Heart left ventricle (tissue), 16 donors: ENCODE measurements at regions of chr7 and their contacts with region 1.

Region 1: GRCh38 chr7:93902777-93903423 is 3.5 kb upstream of the GNGT1 start:
- DNase-seq: peak in 1 of 5 donors; percentile 28
- ATAC-seq: peak; percentile 42 to 60 (median 51)
- H3K4me3 ChIP-seq: no peak overlapping the region
- H3K27ac ChIP-seq: no peak overlapping the region
- H3K4me1 ChIP-seq: peaks cover 0 to 5% (median 0%) of the 10 kb centered on the region in 12 donors
- H3K27me3 ChIP-seq: no peaks in the 10 kb centered on the region
- CTCF ChIP-seq: peak; percentile 62 to 90 (median 79)
- POLR2A ChIP-seq: no peak

Region 2: GRCh38 chr7:93799750-93800357 is 103.0 kb before region 1 on chr7:
- intact Hi-C with region 1: no loop called
- DNase-seq: no peak
- ATAC-seq: no peak
- H3K4me3 ChIP-seq: no peak overlapping the region
- H3K27ac ChIP-seq: no peak overlapping the region
- H3K4me1 ChIP-seq: no peaks in the 10 kb centered on the region
- H3K27me3 ChIP-seq: no peaks in the 10 kb centered on the region
- CTCF ChIP-seq: peak in 10 of 12 donors; percentile 29 to 60 (median 38)
- POLR2A ChIP-seq: no peak

Region 3: DNA sequence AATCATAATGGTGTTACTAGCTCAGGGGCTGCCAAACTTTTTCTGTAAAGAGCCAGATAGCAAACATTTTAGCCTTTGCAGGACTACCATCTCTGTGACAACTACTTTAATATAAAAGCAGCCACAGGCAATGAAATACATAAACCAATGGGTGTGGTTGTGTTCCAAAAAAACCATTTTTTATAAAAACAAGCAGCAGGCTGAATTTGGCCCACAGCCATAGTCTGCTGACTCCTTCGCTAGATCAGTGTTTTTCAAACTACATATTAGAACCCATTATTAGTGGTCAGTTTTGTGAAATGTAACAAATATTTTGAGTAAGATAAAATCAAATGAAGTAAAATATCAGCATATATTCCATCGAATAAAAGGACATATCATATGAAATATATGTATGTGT is 32.2 kb after region 1 on chr7:
- intact Hi-C with region 1: no loop called
- DNase-seq: peak in 1 of 5 donors; percentile 26
- ATAC-seq: no peak
- H3K4me3 ChIP-seq: no peak overlapping the region
- H3K27ac ChIP-seq: no peak overlapping the region
- H3K4me1 ChIP-seq: peaks cover 0 to 8% (median 0%) of the 10 kb centered on the region in 12 donors
- H3K27me3 ChIP-seq: no peaks in the 10 kb centered on the region
- CTCF ChIP-seq: no peak
- POLR2A ChIP-seq: no peak

Region 4: DNA sequence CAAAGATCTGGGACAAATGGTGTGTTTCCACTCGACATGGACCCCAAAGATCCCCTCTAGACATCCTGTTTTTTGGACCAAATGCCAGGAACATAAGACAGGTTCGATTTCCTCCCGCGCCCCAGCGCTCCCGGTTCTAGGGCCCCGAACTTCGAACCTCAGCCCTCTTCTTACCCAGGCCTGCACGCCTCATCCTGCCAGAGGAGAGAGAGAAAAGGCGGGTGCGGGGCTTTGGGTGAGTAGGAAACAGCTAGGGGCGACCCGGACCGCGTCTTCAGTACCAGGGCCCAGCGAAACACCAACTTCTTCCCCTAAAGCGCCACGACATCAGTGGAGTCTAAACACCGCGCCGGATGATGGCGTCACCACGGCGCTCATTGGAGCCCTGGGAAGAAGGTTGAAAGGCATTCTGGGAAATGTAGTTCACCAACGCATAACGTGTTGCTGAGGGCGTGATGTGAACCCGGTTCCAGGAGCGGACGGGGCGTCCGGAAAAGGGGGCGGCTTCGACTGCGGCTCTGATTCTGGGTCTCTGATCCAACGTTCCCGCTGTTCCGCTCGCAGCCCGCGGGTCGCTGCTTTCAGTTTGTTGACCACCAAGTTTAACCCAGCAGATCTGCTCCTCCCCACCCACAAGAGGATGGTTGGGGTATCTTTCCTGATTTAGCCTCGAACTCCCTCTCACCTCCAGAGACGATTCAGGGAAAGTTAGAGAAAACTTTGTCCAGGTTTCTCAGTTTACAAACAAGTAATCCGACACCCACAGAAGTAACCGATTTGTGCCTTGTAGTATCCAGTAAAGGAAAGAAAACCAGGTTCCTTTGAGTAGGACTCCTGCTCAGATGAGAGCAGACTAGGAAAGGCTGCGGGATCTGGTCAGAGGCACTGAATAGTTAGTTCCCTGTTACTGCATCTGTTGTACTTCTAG is 101.4 kb after region 1 on chr7 and contains the start of gene BET1:
- intact Hi-C with region 1: loop called in 4 of 10 experiments (anchors 5 to 10 kb)
- DNase-seq: peak; percentile 94 to 97 (median 96)
- ATAC-seq: peak; percentile 98 to 100 (median 100)
- H3K4me3 ChIP-seq: peak within 1 kb of the TSS; percentile 70 to 91 (median 87)
- H3K27ac ChIP-seq: peak within 1 kb of the TSS; percentile 47 to 93 (median 86)
- H3K4me1 ChIP-seq: peaks cover 0 to 29% (median 19%) of the 10 kb centered on the region in 12 donors
- H3K27me3 ChIP-seq: peaks cover 0 to 5% (median 0%) of the 10 kb centered on the region in 9 donors
- CTCF ChIP-seq: no peak
- POLR2A ChIP-seq: peak in 1 of 2 donors; percentile 74
- total RNA-seq, gene BET1: 8.1 to 16.5 (median 11.5) TPM